Aorta (tissue), 5 donors: ENCODE measurements at regions of chr7 and their contacts with region 1.

Region 1: GRCh38 chr7:2403014-2403717 is at the start of gene CHST12:
- DNase-seq: peak; percentile 96 to 98
- ATAC-seq: peak; percentile 93
- H3K4me3 ChIP-seq: peak within 1 kb of the TSS; percentile 86 to 89
- H3K27ac ChIP-seq: no peak within 1 kb of the TSS
- H3K4me1 ChIP-seq: no peaks in the 10 kb centered on the region
- H3K27me3 ChIP-seq: no peaks in the 10 kb centered on the region
- total RNA-seq, gene CHST12: 19.6 to 31.8 TPM

Region 2: DNA sequence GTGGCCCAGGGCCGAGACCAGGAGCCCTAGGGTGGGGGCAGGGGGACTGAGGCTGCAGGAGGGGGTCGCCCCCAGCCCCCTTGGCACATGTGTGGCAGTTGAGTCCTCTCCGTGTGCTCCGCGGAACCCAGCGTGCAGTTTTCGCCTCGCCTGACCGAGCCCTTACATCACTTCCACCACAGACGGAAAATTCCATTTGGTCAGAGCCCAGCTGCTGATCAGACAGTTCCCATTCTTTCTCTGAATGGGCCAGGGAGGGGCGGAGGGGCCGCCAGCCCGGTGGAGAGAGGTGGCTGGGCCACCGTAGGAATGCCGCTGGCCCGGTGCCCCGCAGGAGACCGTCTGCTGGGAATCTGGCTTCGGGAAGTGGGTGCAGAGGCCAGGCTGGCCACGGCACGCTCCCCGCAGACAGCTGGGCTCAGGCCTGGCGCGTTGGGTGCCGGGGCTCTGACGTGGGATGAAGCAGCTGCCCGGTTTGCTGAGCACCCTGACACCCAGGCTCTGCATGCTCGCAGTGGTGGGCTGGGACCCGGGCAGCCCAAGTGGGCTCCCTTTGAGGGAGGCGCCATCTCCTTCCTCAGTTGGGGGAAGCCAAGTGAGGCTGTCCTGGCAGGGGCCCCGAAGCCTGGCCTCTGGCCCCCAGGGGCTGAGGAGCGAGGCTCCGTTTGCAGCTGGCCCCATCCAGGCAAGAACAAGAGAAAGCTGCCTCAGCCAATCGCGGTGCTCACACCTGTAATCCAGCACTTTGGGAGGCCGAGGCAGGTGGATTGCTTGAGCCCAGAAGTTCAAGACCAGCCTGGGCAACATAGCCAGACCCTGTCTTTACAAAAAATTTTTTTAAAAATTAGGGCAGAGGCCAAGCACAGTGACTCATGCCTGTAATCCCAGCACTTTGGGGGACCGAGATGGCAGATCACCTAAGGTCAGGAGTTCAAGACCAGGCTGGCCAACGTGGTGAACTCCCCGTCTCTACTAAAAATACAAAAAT is 238.5 kb after region 1 on chr7:
- intact Hi-C with region 1: loop called in 1 of 2 experiments (anchors 5 kb)
- DNase-seq: peak; percentile 96 to 97
- ATAC-seq: peak; percentile 84
- H3K4me3 ChIP-seq: no peak overlapping the region
- H3K27ac ChIP-seq: peak overlapping the region in 1 of 2 donors; percentile 41
- H3K4me1 ChIP-seq: no peaks in the 10 kb centered on the region
- H3K27me3 ChIP-seq: no peaks in the 10 kb centered on the region